HepG2 (cell line): ENCODE measurements at regions of chr3 and their contacts with region 1.

Region 1: DNA sequence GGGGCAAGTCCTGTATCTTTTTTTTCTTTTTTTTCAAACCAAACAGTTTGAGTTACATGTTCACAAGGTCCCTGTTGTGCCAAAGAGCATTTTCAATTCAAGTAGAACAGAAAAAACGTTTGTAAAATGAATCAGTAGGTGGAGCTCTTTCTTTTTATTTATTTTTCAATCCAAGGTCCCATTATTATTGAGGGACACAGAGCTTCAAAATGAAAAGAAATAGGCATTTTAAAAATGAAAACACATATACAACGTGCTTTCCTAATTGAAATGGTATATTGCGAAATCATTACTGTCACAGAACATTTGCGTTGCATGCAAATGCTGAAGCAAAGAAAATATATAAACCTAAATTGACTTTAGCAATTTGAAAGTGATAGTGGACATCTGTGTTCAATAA is 711.0 kb downstream of the MECOM start:
- DNase-seq: peak; percentile 5
- ATAC-seq: peak; percentile 51
- H3K4me3 ChIP-seq: no peak overlapping the region
- H3K27ac ChIP-seq: no peak overlapping the region
- H3K4me1 ChIP-seq: no peaks in the 10 kb centered on the region
- H3K27me3 ChIP-seq: no peaks in the 10 kb centered on the region
- CTCF ChIP-seq: peak; percentile 40; the same call in 1 of the 2 replicates
- EP300 ChIP-seq: no peak
- POLR2A ChIP-seq: no peak
- RAD21 ChIP-seq: no peak

Region 2: DNA sequence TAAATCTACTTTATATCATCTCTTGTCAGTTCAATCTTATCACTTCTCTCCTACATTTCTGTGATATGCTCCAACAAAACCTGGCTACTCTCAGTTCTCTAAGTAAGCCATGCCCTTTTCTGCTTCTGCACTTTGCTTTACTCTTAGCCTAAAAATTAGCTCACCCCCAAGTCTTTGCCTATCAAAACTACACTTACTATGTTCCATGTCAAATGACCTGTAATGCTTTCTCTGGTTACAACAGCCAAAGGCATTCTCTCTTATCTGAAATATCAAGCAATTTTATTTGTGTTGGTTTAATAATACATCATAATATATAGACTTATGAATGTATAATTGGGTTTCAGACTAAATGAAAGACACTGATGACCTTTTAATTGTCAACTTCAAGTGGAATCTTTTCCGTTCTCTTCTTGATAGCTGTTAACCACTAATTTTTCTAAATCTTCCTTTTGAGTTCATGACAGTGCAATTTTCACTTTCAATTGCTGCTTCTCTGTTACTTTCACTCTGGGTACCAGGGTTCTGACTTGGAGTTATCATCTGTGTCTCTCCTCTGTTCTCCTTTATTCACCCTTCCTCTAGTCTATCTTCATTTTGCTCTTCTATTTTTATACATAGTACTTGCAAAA is 237.8 kb before region 1 on chr3:
- CTCF ChIA-PET with region 1: no interaction called
- POLR2A ChIA-PET with region 1: no interaction called
- in situ Hi-C with region 1: no loop called
- intact Hi-C with region 1: no loop called
- DNase-seq: no peak
- ATAC-seq: no peak
- H3K4me3 ChIP-seq: no peak overlapping the region
- H3K27ac ChIP-seq: no peak overlapping the region
- H3K4me1 ChIP-seq: no peaks in the 10 kb centered on the region
- H3K27me3 ChIP-seq: no peaks in the 10 kb centered on the region
- CTCF ChIP-seq: no peak
- EP300 ChIP-seq: no peak
- POLR2A ChIP-seq: no peak
- RAD21 ChIP-seq: no peak

Region 3: GRCh38 chr3:168865022-168865551 is 87.5 kb before region 1 on chr3:
- CTCF ChIA-PET with region 1: no interaction called
- POLR2A ChIA-PET with region 1: no interaction called
- in situ Hi-C with region 1: no loop called
- intact Hi-C with region 1: loop called (anchors 5 kb)
- DNase-seq: no peak
- ATAC-seq: no peak
- H3K4me3 ChIP-seq: no peak overlapping the region
- H3K27ac ChIP-seq: no peak overlapping the region
- H3K4me1 ChIP-seq: peaks cover 87% of the 10 kb centered on the region
- H3K27me3 ChIP-seq: no peaks in the 10 kb centered on the region
- CTCF ChIP-seq: peak; percentile 48; the same call in 1 of the 2 replicates
- EP300 ChIP-seq: no peak
- POLR2A ChIP-seq: no peak
- RAD21 ChIP-seq: no peak

Region 4: GRCh38 chr3:169295126-169295525 is 342.6 kb after region 1 on chr3:
- CTCF ChIA-PET with region 1: no interaction called
- POLR2A ChIA-PET with region 1: no interaction called
- in situ Hi-C with region 1: no loop called
- intact Hi-C with region 1: loop called (anchors 5 kb)
- DNase-seq: no peak
- ATAC-seq: no peak
- H3K4me3 ChIP-seq: no peak overlapping the region
- H3K27ac ChIP-seq: no peak overlapping the region
- H3K4me1 ChIP-seq: no peaks in the 10 kb centered on the region
- H3K27me3 ChIP-seq: no peaks in the 10 kb centered on the region
- CTCF ChIP-seq: 0 out of 2 replicates have a peak, but pooled peaks have one; percentile 11
- EP300 ChIP-seq: no peak
- POLR2A ChIP-seq: no peak
- RAD21 ChIP-seq: no peak